ENCODE measurements at regions of chr22 and their contacts with region 1.

Region 1: DNA sequence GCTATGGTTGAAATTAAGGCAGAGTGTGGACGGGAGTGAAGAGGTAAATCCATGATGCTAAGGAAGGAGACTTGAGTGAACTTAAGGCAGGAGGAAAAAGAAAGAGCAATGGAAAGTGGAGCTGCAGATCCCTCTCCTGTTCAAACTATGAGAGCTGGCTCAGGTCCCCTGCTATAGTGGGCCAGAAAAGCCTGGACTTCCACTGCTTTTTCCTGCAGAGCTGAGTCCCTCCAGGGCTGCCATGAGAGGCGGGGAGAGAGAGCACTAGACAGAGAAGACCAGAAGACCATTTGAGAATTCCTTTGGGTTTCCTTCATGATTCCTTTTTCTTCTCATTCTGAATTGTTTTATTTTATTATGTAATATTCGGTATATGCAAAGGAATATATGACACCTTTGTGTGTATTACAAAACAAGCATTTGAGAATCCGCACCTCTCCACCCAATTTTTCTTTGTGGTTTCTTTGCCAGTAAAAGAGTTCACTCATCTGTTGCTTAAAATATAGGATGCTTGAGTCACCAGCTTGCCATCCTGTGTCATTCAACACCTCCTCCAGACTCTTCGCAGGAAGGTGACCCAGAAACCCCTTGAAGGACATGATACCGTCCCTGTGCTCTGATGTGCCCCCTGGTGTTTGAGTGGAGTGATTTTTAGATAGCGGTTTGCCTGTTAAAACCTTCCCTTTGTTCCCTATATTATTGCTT is 24.4 kb downstream of the SREBF2 start:
- H3K4me3 Mint-ChIP-seq: no peak overlapping the region
- H3K27ac Mint-ChIP-seq: peak overlapping the region; percentile 18
- H3K4me1 Mint-ChIP-seq: peaks cover 54% of the 10 kb centered on the region
- H3K27me3 Mint-ChIP-seq: no peaks in the 10 kb centered on the region

Region 2: DNA sequence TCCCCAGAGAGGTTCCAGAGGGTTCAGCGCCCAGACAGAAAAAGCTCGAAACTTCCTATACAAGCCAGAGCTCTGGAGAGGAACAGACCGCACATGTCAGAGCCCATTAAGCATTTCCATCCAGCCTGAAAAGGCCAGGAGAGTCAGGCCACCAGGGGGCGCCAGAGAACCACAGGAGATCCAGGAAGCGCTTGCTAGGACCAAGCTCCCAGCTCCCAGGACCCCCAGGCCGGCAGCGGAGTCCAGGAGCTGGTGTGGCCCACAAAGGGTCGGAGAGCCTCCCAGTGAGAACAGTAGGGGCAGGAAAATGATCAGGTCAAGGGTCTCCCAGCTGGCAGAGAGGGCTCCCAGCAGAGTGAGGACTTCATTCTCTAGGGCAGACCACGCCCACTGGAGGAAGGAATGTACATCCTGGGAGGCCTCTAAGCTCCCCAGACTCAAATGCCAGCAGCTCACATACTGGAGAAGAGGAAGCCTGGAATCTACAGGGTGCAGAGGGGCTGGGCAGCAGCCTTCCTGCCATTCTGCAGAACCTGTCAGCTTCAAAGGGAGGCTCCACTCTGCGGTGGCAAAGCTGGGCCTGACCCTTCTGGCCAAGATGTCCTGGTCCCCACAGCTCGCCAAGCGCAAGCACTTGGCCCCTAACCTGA is 160.1 kb before region 1 on chr22:
- intact Hi-C with region 1: loop called (anchors 10 kb)
- H3K4me3 Mint-ChIP-seq: peak overlapping the region; percentile 59
- H3K27ac Mint-ChIP-seq: no peak overlapping the region
- H3K4me1 Mint-ChIP-seq: peaks cover 5% of the 10 kb centered on the region
- H3K27me3 Mint-ChIP-seq: peaks cover 5% of the 10 kb centered on the region

Region 3: GRCh38 chr22:41746567-41747400 is 110.5 kb before region 1 on chr22:
- intact Hi-C with region 1: loop called (anchors 2 kb)
- H3K4me3 Mint-ChIP-seq: no peak overlapping the region
- H3K27ac Mint-ChIP-seq: no peak overlapping the region
- H3K4me1 Mint-ChIP-seq: peaks cover 7% of the 10 kb centered on the region
- H3K27me3 Mint-ChIP-seq: peaks cover 27% of the 10 kb centered on the region

Region 4: GRCh38 chr22:41768430-41768829 is 88.9 kb before region 1 on chr22:
- intact Hi-C with region 1: no loop called
- H3K4me3 Mint-ChIP-seq: no peak overlapping the region
- H3K27ac Mint-ChIP-seq: peak overlapping the region; percentile 80
- H3K4me1 Mint-ChIP-seq: peaks cover 49% of the 10 kb centered on the region
- H3K27me3 Mint-ChIP-seq: no peaks in the 10 kb centered on the region

Region 5: DNA sequence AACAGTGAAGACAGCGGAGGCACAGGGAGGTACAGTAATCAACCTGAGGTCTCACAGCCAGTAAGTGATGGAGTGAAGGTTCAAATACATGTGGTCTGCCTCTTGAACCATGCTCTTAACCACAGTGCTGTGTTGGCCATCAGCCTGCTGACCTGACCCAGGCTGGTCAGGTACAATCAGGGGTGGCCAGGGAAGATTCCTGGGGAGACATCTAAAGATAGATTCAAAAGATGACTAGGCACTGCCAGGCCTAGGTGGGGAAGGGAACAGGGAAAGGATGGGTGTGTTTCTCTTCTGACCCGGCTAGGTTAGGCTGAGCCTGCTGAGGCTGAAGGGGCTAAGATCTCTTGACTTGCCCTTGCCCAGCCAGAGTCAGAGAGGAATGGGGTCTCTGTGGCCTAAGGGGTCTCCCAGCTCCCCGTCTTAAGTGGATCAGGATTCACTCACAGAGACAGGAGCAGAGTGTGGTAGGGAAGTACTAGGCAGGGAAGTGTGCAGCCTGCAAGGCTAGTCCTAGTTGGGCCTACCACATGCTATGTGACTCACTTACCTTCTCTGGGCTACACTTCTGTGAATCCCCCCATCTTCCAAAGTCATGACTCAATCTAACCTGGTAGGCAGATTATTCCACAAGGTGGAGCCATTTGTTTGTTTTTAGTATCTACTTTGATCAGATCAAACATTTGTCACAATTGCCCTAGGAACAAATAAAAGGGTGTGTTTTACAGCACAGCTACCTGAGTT is 34.8 kb before region 1 on chr22:
- intact Hi-C with region 1: loop called (anchors 2 kb)
- H3K4me3 Mint-ChIP-seq: no peak overlapping the region
- H3K27ac Mint-ChIP-seq: no peak overlapping the region
- H3K4me1 Mint-ChIP-seq: peaks cover 47% of the 10 kb centered on the region
- H3K27me3 Mint-ChIP-seq: no peaks in the 10 kb centered on the region

Measured in dendritic cell treated with granulocyte-macrophage colony-stimulating factor and Interleukin-4, amounts not matched to agents 40 ng/mL and 50 ng/mL, for 4 days (primary cell).